CD4-positive, alpha-beta memory T cell (primary cell): ENCODE measurements at regions of chr7 and their contacts with region 1.

Region 1: DNA sequence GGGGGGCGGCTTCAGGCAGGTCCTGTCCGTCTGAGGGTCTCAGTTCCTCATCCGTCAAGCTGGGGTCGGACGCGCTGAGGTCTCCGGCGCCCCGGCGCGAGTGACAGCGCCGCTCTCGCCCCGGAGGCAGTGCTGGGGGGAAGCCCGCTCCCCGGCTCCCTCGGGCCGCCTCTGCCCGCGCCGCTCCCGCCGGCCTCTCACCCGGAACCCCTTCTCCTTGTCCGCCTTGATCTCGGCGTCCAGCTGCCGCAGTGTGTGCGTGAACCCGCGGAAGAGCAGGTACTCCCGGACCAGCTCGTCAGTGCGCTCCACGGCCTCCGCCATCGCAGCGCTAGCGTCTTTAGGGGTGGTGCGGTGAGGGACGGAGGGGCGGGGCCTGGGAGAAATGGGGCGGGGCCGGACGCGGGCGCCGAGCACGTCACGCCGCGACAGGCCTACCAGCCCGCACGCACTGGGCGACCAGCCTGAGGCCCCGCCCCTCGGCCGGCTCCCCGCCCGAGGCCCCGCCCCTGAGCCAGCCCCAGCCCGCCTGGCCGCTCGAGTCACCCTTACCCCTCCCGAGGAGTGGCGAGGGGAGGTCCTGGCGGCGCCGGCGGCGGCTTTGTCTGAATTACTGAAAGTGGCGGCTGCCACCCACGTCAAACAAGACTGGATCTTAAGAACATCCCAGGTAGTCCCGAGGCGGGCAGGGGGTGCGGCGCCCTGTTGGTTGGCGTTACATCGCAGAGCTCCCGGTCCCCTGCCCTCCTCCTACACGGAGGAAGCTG is at the start of gene WDR91:
- DNase-seq: peak; percentile 89 to 95 (median 90)
- H3K4me3 ChIP-seq: peak within 1 kb of the TSS; percentile 71 to 80
- H3K4me3 Mint-ChIP-seq: peak within 1 kb of the TSS; percentile 96 to 99 (median 98)
- H3K27ac ChIP-seq: peak within 1 kb of the TSS; percentile 85
- H3K27ac Mint-ChIP-seq: peak within 1 kb of the TSS; percentile 92 to 99 (median 99)
- H3K4me1 ChIP-seq: peaks cover 27% of the 10 kb centered on the region
- H3K4me1 Mint-ChIP-seq: peaks cover 13 to 46% (median 28%) of the 10 kb centered on the region in 4 donors
- H3K27me3 ChIP-seq: no peaks in the 10 kb centered on the region
- H3K27me3 Mint-ChIP-seq: no peaks in the 10 kb centered on the region
- total RNA-seq, gene WDR91: 29.1 to 29.4 TPM

Region 2: DNA sequence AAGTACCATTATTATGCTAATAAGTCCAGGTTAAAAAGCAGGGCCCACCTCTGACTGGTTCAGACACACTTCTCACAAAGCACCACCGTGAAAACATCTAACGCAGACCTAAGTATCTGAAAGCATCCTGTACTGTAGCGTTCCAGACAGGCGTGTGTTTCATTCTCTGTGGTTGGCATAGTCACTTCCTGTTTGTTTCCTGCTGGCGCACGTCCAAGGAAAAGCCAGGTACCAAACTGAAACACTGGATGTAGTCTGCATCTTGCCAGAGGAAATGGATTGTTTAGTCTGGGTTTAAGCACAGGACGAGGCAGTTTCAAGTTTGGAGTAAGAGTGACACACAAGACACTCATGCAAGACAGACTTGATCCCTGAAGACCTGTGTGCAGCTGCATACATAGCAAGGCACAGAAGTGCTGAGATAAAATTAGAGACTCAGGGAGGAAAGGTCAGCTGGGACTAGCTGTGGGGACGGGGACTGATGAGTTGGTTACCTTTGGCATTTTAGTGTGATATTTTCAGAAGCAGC is 541.5 kb before region 1 on chr7:
- CTCF ChIA-PET with region 1: no interaction called
- POLR2A ChIA-PET with region 1: no interaction called
- intact Hi-C with region 1: loop called (anchors 1 kb)
- DNase-seq: peak; percentile 84 to 94 (median 85)
- H3K4me3 ChIP-seq: peak overlapping the region in 1 of 2 donors; percentile 4
- H3K4me3 Mint-ChIP-seq: peak overlapping the region; percentile 74 to 87 (median 78)
- H3K27ac ChIP-seq: peak overlapping the region; percentile 48
- H3K27ac Mint-ChIP-seq: peak overlapping the region; percentile 91 to 100 (median 98)
- H3K4me1 ChIP-seq: peaks cover 33% of the 10 kb centered on the region
- H3K4me1 Mint-ChIP-seq: peaks cover 26 to 46% (median 37%) of the 10 kb centered on the region in 4 donors
- H3K27me3 ChIP-seq: no peaks in the 10 kb centered on the region
- H3K27me3 Mint-ChIP-seq: no peaks in the 10 kb centered on the region

Region 3: GRCh38 chr7:135147899-135148721 is 63.3 kb before region 1 on chr7 and contains the start of gene TMEM140:
- CTCF ChIA-PET with region 1: interaction called, 6 read pairs
- POLR2A ChIA-PET with region 1: interaction called, 30 read pairs
- intact Hi-C with region 1: loop called (anchors 1 kb)
- DNase-seq: peak; percentile 74 to 85 (median 80)
- H3K4me3 ChIP-seq: peak within 1 kb of the TSS; percentile 48 to 67
- H3K4me3 Mint-ChIP-seq: peak within 1 kb of the TSS; percentile 85 to 96 (median 92)
- H3K27ac ChIP-seq: peak within 1 kb of the TSS; percentile 90
- H3K27ac Mint-ChIP-seq: peak within 1 kb of the TSS; percentile 90 to 99 (median 98)
- H3K4me1 ChIP-seq: peaks cover 61% of the 10 kb centered on the region
- H3K4me1 Mint-ChIP-seq: peaks cover 44 to 78% (median 59%) of the 10 kb centered on the region in 4 donors
- H3K27me3 ChIP-seq: no peaks in the 10 kb centered on the region
- H3K27me3 Mint-ChIP-seq: no peaks in the 10 kb centered on the region
- total RNA-seq, gene TMEM140: 28.3 to 31.3 TPM

Region 4: DNA sequence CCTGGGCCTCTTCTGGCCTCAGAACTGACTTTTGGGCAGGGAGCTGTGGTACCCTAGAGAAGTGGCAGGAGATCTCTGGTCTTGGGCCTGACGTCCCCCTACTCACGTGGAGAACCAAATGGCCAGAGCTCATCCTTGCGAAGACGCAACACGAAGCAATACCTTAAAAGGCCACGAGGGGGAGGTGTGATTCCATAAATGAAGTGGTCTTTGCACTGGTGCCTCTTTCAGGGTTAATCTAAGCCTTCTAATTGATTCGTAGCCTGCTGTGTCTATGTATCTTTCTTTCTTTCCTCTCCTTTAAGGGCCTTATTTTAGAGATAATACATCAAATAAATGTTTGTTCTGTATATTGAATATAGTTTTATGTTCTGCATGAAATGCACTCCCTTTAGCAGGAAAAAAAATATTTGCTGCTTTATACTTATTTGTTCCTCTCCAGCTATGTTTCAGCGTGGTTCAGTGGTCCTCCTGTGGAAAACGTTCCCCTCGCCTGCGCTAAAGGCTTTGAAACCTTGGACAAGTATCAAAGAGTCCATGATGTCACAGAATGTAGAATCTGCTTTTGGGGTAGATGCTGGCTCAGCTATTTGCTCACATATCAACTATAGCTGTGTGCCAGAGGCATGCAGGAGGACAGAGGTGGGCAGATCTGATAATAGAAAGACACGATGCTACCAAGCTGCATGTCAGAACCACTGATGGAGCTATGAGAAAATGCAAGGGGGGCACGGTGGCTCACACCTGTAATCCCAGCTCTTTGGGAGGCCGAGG is 63.3 kb after region 1 on chr7:
- CTCF ChIA-PET with region 1: no interaction called
- POLR2A ChIA-PET with region 1: no interaction called
- intact Hi-C with region 1: loop called (anchors 2 kb)
- DNase-seq: peak; percentile 55 to 65 (median 58)
- H3K4me3 ChIP-seq: no peak overlapping the region
- H3K4me3 Mint-ChIP-seq: no peak overlapping the region
- H3K27ac ChIP-seq: no peak overlapping the region
- H3K27ac Mint-ChIP-seq: no peak overlapping the region
- H3K4me1 ChIP-seq: no peaks in the 10 kb centered on the region
- H3K4me1 Mint-ChIP-seq: peaks cover 0 to 4% (median 3%) of the 10 kb centered on the region in 4 donors
- H3K27me3 ChIP-seq: no peaks in the 10 kb centered on the region
- H3K27me3 Mint-ChIP-seq: peaks cover 4 to 6% of the 10 kb centered on the region in 2 donors

Region 5: DNA sequence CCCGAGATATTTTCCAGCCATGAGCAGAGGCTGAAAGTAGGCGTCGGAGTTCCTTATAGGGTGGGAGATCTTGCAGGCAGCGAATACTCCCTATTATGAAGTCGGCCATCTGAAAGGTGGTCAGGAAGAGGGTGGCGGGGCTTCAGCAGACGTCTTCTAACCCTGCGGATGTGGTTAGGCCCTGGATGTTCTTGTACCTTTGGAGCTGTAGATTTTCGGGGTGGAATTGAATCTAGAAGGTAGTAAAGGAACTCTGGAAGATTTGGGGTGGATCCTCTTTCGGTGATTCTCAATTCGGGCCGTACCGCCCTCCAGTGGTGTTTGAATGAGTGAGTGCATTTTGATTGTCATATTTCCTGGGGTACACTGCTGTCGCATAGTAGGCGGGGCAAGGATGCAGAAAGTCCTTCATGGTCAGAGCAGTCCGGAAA is 347.0 kb after region 1 on chr7:
- CTCF ChIA-PET with region 1: no interaction called
- POLR2A ChIA-PET with region 1: interaction called, 3 read pairs
- intact Hi-C with region 1: loop called (anchors 1 kb)
- DNase-seq: peak; percentile 68 to 80 (median 70)
- H3K4me3 ChIP-seq: peak overlapping the region; percentile 92 to 96
- H3K4me3 Mint-ChIP-seq: no peak overlapping the region
- H3K27ac ChIP-seq: peak overlapping the region; percentile 92
- H3K27ac Mint-ChIP-seq: no peak overlapping the region
- H3K4me1 ChIP-seq: peaks cover 24% of the 10 kb centered on the region
- H3K4me1 Mint-ChIP-seq: peaks cover 17 to 23% (median 19%) of the 10 kb centered on the region in 4 donors
- H3K27me3 ChIP-seq: no peaks in the 10 kb centered on the region
- H3K27me3 Mint-ChIP-seq: peaks cover 0 to 2% of the 10 kb centered on the region in 2 donors

Region 6: GRCh38 chr7:135977007-135977741 is 765.8 kb after region 1 on chr7 and contains the start of gene MTPN:
- CTCF ChIA-PET with region 1: no interaction called
- POLR2A ChIA-PET with region 1: no interaction called
- intact Hi-C with region 1: loop called (anchors 1 kb)
- DNase-seq: peak; percentile 95 to 98 (median 97)
- H3K4me3 ChIP-seq: peak within 1 kb of the TSS; percentile 82 to 90
- H3K4me3 Mint-ChIP-seq: peak within 1 kb of the TSS; percentile 89 to 100 (median 96)
- H3K27ac ChIP-seq: peak within 1 kb of the TSS; percentile 93
- H3K27ac Mint-ChIP-seq: peak within 1 kb of the TSS; percentile 89 to 98 (median 95)
- H3K4me1 ChIP-seq: peaks cover 88% of the 10 kb centered on the region
- H3K4me1 Mint-ChIP-seq: peaks cover 59 to 94% (median 76%) of the 10 kb centered on the region in 4 donors
- H3K27me3 ChIP-seq: no peaks in the 10 kb centered on the region
- H3K27me3 Mint-ChIP-seq: no peaks in the 10 kb centered on the region
- total RNA-seq, gene MTPN: 83.1 to 84.5 TPM